Naive thymus-derived CD4-positive, alpha-beta T cell (primary cell): ENCODE measurements at regions of chr2 and their contacts with region 1.

Region 1: DNA sequence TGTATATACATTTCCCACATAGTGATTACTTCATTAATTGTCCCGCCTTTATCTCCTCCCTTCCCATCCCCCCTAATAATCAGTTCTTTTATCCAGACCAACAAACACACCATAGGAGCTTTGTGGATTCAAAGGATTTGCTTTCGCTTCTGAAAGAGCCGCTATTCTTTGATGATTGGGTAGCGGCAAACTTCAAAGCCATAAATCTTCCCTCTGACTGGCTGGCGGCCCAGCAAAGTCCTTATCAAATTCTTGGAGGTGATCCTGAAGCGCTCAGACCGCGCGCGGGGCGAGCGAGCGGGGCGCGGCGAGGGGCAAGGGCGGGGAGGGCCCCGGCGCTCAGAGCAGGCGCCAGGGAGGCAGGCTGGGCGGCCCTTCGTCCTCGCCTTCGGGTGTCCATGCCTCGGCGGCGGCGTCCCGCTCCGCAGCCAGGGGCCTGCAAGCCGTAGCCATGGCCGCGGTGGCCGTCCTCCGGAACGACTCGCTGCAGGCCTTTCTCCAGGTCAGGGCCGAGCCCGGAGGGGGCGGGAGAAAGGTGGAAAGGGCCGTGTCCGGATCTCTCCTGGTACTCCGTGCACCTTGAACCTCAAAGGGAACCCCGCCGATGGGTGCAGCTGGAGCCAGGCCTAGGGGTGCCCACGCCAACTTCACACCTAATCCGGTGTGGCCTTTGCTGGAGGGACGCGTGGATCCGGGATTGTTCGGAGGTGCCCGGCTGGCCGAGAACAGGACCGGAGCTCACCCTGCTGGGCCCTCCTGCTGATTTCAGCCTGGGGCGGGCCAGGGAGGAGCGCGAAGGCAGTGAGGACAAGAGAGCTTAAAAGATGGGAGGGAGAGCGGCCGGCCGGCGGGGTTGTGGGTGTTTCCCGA is at the start of gene SP5:
- DNase-seq: peak; percentile 25 to 63 (median 52)
- ATAC-seq: peak; percentile 44
- H3K4me3 ChIP-seq: peak within 1 kb of the TSS; percentile 64
- H3K4me3 Mint-ChIP-seq: peak within 1 kb of the TSS; percentile 81 to 99 (median 93)
- H3K27ac ChIP-seq: no peak within 1 kb of the TSS
- H3K27ac Mint-ChIP-seq: peak within 1 kb of the TSS in 5 of 9 donors; percentile 47 to 76 (median 52)
- H3K4me1 ChIP-seq: peaks cover 0 to 39% of the 10 kb centered on the region in 2 donors
- H3K4me1 Mint-ChIP-seq: peaks cover 18 to 50% (median 34%) of the 10 kb centered on the region in 7 donors
- H3K27me3 ChIP-seq: peaks cover 11 to 41% of the 10 kb centered on the region in 2 donors
- H3K27me3 Mint-ChIP-seq: peaks cover 67 to 74% (median 69%) of the 10 kb centered on the region in 5 donors
- total RNA-seq, gene SP5: not detected

Region 2: DNA sequence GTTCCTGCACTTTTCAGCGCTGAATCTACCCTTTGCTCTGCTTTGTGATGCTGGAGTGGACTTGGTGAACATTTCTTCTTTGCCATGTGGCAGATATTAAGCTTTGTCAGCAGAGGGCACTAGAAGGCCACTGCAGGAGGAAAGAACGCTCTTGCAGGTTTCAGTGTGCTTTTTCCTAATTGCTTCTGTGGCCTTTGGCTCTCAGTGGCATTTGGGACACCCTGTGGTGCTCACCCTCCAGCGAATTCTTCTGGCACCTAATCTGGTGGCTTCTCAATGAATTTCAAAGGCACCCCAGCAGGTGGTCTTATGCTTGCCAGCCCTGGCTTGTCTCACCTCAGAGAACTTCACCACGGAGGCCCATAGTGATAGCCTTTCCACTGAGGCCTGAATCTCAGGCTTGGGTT is 390.7 kb before region 1 on chr2:
- CTCF ChIA-PET with region 1: no interaction called
- POLR2A ChIA-PET with region 1: no interaction called
- intact Hi-C with region 1: loop called in 1 of 2 experiments (anchors 5 kb)
- DNase-seq: peak in 8 of 9 donors; percentile 5 to 57 (median 34)
- ATAC-seq: peak; percentile 31
- H3K4me3 ChIP-seq: no peak overlapping the region
- H3K4me3 Mint-ChIP-seq: no peak overlapping the region
- H3K27ac ChIP-seq: no peak overlapping the region
- H3K27ac Mint-ChIP-seq: no peak overlapping the region
- H3K4me1 ChIP-seq: no peaks in the 10 kb centered on the region
- H3K4me1 Mint-ChIP-seq: peaks cover 0 to 2% (median 0%) of the 10 kb centered on the region in 7 donors
- H3K27me3 ChIP-seq: no peaks in the 10 kb centered on the region
- H3K27me3 Mint-ChIP-seq: peaks cover 0 to 7% (median 3%) of the 10 kb centered on the region in 5 donors

Region 3: GRCh38 chr2:170467568-170468422 is 247.5 kb before region 1 on chr2:
- CTCF ChIA-PET with region 1: no interaction called
- POLR2A ChIA-PET with region 1: no interaction called
- intact Hi-C with region 1: no loop called
- DNase-seq: no peak
- ATAC-seq: no peak
- H3K4me3 ChIP-seq: no peak overlapping the region
- H3K4me3 Mint-ChIP-seq: no peak overlapping the region
- H3K27ac ChIP-seq: no peak overlapping the region
- H3K27ac Mint-ChIP-seq: no peak overlapping the region
- H3K4me1 ChIP-seq: no peaks in the 10 kb centered on the region
- H3K4me1 Mint-ChIP-seq: no peaks in the 10 kb centered on the region
- H3K27me3 ChIP-seq: no peaks in the 10 kb centered on the region
- H3K27me3 Mint-ChIP-seq: peaks cover under 1 to 8% (median 4%) of the 10 kb centered on the region in 5 donors

Region 4: GRCh38 chr2:170486730-170487129 is 228.6 kb before region 1 on chr2:
- CTCF ChIA-PET with region 1: no interaction called
- POLR2A ChIA-PET with region 1: no interaction called
- intact Hi-C with region 1: loop called in 1 of 2 experiments (anchors 10 kb)
- DNase-seq: peak in 5 of 9 donors; percentile 5 to 35 (median 9)
- ATAC-seq: no peak
- H3K4me3 ChIP-seq: no peak overlapping the region
- H3K4me3 Mint-ChIP-seq: no peak overlapping the region
- H3K27ac ChIP-seq: no peak overlapping the region
- H3K27ac Mint-ChIP-seq: no peak overlapping the region
- H3K4me1 ChIP-seq: no peaks in the 10 kb centered on the region
- H3K4me1 Mint-ChIP-seq: peaks cover 0 to 2% (median 0%) of the 10 kb centered on the region in 7 donors
- H3K27me3 ChIP-seq: no peaks in the 10 kb centered on the region
- H3K27me3 Mint-ChIP-seq: peaks cover 4 to 15% (median 9%) of the 10 kb centered on the region in 5 donors

Region 5: DNA sequence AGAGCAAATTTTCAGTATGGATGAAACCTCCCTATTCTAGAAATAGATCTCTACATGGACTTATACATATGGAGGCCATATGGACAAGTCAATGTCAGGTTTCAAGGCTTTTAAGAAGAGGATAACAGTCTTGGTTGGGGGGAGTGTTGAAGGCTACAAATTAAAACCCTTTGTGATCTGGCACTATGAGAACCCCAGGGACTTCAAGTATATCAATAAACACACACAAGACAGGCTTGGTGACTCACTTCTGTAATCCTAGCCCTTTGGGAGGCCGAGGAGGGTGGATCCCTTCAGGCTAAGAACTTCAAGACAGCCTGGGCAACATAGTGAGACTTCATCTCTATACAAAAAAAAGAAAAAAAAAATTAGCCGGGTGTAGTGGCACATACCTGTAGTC is 127.4 kb before region 1 on chr2:
- CTCF ChIA-PET with region 1: no interaction called
- POLR2A ChIA-PET with region 1: no interaction called
- intact Hi-C with region 1: loop called in 1 of 2 experiments (anchors 10 kb)
- DNase-seq: no peak
- ATAC-seq: no peak
- H3K4me3 ChIP-seq: no peak overlapping the region
- H3K4me3 Mint-ChIP-seq: no peak overlapping the region
- H3K27ac ChIP-seq: no peak overlapping the region
- H3K27ac Mint-ChIP-seq: no peak overlapping the region
- H3K4me1 ChIP-seq: no peaks in the 10 kb centered on the region
- H3K4me1 Mint-ChIP-seq: no peaks in the 10 kb centered on the region
- H3K27me3 ChIP-seq: no peaks in the 10 kb centered on the region
- H3K27me3 Mint-ChIP-seq: peaks cover 0 to 15% (median 6%) of the 10 kb centered on the region in 5 donors

Region 6: GRCh38 chr2:170695521-170696410 is 19.5 kb before region 1 on chr2:
- CTCF ChIA-PET with region 1: no interaction called
- POLR2A ChIA-PET with region 1: no interaction called
- intact Hi-C with region 1: no loop called
- DNase-seq: no peak
- ATAC-seq: no peak
- H3K4me3 ChIP-seq: no peak overlapping the region
- H3K4me3 Mint-ChIP-seq: no peak overlapping the region
- H3K27ac ChIP-seq: no peak overlapping the region
- H3K27ac Mint-ChIP-seq: no peak overlapping the region
- H3K4me1 ChIP-seq: no peaks in the 10 kb centered on the region
- H3K4me1 Mint-ChIP-seq: no peaks in the 10 kb centered on the region
- H3K27me3 ChIP-seq: no peaks in the 10 kb centered on the region
- H3K27me3 Mint-ChIP-seq: peaks cover 12 to 29% (median 20%) of the 10 kb centered on the region in 5 donors

Region 7: DNA sequence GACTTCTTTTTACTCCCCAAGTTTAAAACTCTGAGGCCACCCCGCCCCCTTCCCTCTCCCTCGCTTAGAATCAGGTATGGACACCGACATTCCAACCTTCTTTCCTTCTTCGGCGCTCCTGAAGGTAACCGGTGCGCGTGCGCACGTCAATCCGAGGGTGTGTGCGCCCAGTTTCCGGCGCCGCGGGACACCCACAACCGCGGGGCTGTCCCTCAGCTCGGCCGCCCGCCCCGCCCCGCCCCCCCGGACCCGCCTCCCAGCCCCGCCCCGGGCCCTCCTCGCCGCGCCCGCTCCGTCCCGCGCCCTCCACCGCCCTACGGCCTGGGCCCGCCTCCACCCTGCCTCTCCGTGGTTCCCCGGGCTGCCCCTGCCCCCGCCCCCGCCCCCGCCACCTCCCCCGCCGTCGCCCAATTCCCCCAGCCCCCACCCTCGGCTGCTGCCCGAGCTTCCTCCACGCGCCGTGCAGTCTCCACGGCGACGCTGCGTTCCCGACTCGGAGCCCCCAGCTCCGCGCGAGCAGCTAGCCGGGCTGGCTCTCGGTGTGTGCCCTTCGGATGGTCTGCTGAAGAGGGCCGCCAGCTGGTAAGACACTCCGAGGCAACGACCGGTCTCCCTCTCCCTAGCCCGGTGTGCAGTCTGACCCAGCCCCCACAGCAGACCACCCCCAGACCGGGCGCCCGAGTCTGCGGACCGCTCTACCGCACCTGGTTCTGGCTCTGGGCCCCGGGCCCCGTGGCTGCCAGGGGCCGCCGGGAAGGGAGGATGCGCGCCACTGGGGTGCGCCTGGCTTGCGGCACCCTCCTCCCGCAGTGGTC is 55.5 kb after region 1 on chr2:
- CTCF ChIA-PET with region 1: no interaction called
- POLR2A ChIA-PET with region 1: no interaction called
- intact Hi-C with region 1: loop called (anchors 2 to 5 kb)
- DNase-seq: peak; percentile 31 to 77 (median 50)
- ATAC-seq: peak; percentile 91
- H3K4me3 ChIP-seq: peak overlapping the region; percentile 74
- H3K4me3 Mint-ChIP-seq: peak overlapping the region; percentile 77 to 91 (median 84)
- H3K27ac ChIP-seq: peak overlapping the region; percentile 51
- H3K27ac Mint-ChIP-seq: peak overlapping the region in 6 of 9 donors; percentile 27 to 80 (median 55)
- H3K4me1 ChIP-seq: peaks cover 4 to 8% of the 10 kb centered on the region in 2 donors
- H3K4me1 Mint-ChIP-seq: peaks cover 6 to 34% (median 18%) of the 10 kb centered on the region in 7 donors
- H3K27me3 ChIP-seq: no peaks in the 10 kb centered on the region
- H3K27me3 Mint-ChIP-seq: peaks cover 0 to 52% (median 10%) of the 10 kb centered on the region in 5 donors